Activated CD4-positive, alpha-beta memory T cell treated with anti-CD3 and anti-CD28 coated beads for 36 hours (primary cell): ENCODE measurements at regions of chr12 and their contacts with region 1.

Region 1: GRCh38 chr12:110513842-110514241 is 11.7 kb downstream of the RAD9B start:
- DNase-seq: no peak
- H3K4me3 Mint-ChIP-seq: no peak overlapping the region
- H3K27ac Mint-ChIP-seq: no peak overlapping the region
- H3K4me1 Mint-ChIP-seq: no peaks in the 10 kb centered on the region
- H3K27me3 Mint-ChIP-seq: no peaks in the 10 kb centered on the region

Region 2: GRCh38 chr12:110449799-110450497 is 63.9 kb before region 1 on chr12 and contains the start of gene ARPC3:
- CTCF ChIA-PET with region 1: interaction called, 10 read pairs
- POLR2A ChIA-PET with region 1: interaction called, 3 read pairs
- intact Hi-C with region 1: no loop called
- DNase-seq: peak; percentile 97
- H3K4me3 Mint-ChIP-seq: peak within 1 kb of the TSS; percentile 100
- H3K27ac Mint-ChIP-seq: peak within 1 kb of the TSS; percentile 99
- H3K4me1 Mint-ChIP-seq: peaks cover 35% of the 10 kb centered on the region
- H3K27me3 Mint-ChIP-seq: no peaks in the 10 kb centered on the region
- total RNA-seq, gene ARPC3: 340 to 352 TPM